A549 (cell line): ENCODE measurements at regions of chr9 and their contacts with region 1.

Region 1: GRCh38 chr9:138053321-138053868 is 175.8 kb downstream of the CACNA1B start:
- DNase-seq: peak in 1 of 2 experiments; percentile 17
- ATAC-seq: peak in 1 of 2 experiments; percentile 56; a peak in 3 of 6 replicates
- H3K4me3 ChIP-seq: no peak overlapping the region
- H3K27ac ChIP-seq: no peak overlapping the region
- H3K4me1 ChIP-seq: no peaks in the 10 kb centered on the region
- CTCF ChIP-seq: no peak
- EP300 ChIP-seq: no peak
- POLR2A ChIP-seq: no peak
- RAD21 ChIP-seq: no peak

Region 2: GRCh38 chr9:137907776-137908175 is 145.6 kb before region 1 on chr9:
- CTCF ChIA-PET with region 1: no interaction called
- POLR2A ChIA-PET with region 1: interaction called, 10 read pairs
- DNase-seq: no peak
- ATAC-seq: no peak
- H3K4me3 ChIP-seq: no peak overlapping the region
- H3K27ac ChIP-seq: no peak overlapping the region
- H3K4me1 ChIP-seq: no peaks in the 10 kb centered on the region
- CTCF ChIP-seq: no peak
- EP300 ChIP-seq: no peak
- POLR2A ChIP-seq: no peak
- RAD21 ChIP-seq: no peak